ENCODE measurements at regions of chr2 and their contacts with region 1.

Region 1: GRCh38 chr2:153299809-153300208 is 178.8 kb downstream of the RPRM start:
- H3K4me3 Mint-ChIP-seq: no peak overlapping the region
- H3K27ac Mint-ChIP-seq: no peak overlapping the region
- H3K4me1 Mint-ChIP-seq: no peaks in the 10 kb centered on the region
- H3K27me3 Mint-ChIP-seq: no peaks in the 10 kb centered on the region

Region 2: GRCh38 chr2:152944099-152944498 is 355.7 kb before region 1 on chr2:
- intact Hi-C with region 1: no loop called
- H3K4me3 Mint-ChIP-seq: no peak overlapping the region
- H3K27ac Mint-ChIP-seq: no peak overlapping the region
- H3K4me1 Mint-ChIP-seq: no peaks in the 10 kb centered on the region
- H3K27me3 Mint-ChIP-seq: no peaks in the 10 kb centered on the region

Region 3: GRCh38 chr2:153174183-153174582 is 125.6 kb before region 1 on chr2:
- intact Hi-C with region 1: no loop called
- H3K4me3 Mint-ChIP-seq: no peak overlapping the region
- H3K27ac Mint-ChIP-seq: no peak overlapping the region
- H3K4me1 Mint-ChIP-seq: no peaks in the 10 kb centered on the region
- H3K27me3 Mint-ChIP-seq: no peaks in the 10 kb centered on the region

Region 4: DNA sequence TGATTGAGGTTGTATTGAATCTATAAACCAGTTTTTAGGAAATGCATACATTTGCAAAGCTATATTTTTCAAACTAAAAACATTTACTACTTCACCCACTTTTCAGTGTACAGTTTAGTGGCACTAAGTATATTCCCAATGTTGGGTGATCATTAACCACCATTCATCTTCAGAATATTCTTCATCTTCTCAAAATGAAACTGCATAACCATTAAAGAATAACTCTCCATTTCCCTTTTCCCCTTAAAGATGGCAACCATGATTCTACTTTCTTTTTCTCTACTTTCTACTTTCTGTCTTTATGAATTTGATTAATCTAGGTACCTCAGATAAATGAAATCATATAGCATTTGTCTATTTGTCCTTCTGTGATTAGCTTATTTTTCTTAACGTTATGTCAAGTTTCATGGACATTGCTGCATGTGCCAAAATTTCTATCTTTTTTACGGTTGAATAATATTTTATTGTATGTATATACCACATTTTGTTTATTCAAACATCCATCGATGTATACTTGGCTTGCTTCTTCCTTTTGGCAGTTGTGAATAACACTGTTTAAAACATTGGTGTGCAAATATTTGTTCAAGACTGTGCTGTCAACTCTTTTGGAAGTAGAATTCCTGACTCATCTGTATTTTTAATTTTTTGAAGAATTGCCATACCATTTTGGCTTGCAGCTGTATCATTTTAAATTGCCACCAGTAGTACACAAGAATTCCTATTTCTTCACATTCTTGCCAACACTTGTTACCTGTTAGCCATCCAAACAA is 73.9 kb after region 1 on chr2:
- intact Hi-C with region 1: loop called (anchors 2 kb)
- H3K4me3 Mint-ChIP-seq: no peak overlapping the region
- H3K27ac Mint-ChIP-seq: no peak overlapping the region
- H3K4me1 Mint-ChIP-seq: no peaks in the 10 kb centered on the region
- H3K27me3 Mint-ChIP-seq: no peaks in the 10 kb centered on the region